ENCODE measurements at regions of chr22 and their contacts with region 1.

Region 1: DNA sequence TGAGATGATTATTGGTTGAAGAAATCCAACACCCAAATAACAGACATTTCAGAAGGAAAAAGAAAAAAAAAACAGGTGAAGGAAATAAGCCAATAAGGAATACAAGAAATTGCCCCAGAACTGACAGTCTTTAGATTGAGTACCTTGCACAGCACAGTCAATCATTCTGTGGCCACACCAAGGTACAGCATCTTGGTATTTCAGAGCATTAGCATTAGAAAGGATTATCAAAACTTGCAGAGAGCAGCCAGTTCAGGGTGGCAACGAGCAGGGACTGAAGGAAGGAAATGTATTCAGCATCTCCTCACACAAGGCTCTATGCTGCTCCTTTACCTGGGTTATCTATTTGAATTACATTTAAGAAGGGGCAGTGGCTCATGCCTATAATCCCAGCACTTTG is 2.1 kb downstream of the ADA2 start:
- DNase-seq: no peak
- ATAC-seq: peak; percentile 43
- H3K4me3 Mint-ChIP-seq: peak overlapping the region; percentile 85
- H3K27ac Mint-ChIP-seq: peak overlapping the region; percentile 88
- H3K4me1 Mint-ChIP-seq: peaks cover 60% of the 10 kb centered on the region
- H3K27me3 Mint-ChIP-seq: no peaks in the 10 kb centered on the region

Region 2: DNA sequence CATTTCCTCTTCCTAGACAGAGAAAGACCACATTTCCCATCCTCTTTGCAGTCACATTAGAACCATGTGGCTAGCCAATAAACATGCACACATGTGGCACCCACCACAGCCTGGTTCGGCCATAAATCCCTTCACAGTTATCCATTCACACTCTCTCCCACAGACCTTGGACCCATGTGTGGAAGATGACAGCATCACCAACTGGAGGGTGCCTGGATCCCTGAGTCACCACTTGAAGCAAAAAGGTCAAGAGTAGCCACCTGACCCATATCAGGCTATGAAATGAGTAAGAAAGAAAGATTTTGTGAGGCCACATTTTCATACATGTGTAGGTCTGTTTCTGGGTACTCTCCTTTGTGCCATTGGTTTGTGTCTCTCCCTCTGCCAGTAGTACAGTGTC is 87.0 kb before region 1 on chr22:
- POLR2A ChIA-PET with region 1: no interaction called
- DNase-seq: no peak
- ATAC-seq: no peak
- H3K4me3 Mint-ChIP-seq: no peak overlapping the region
- H3K27ac Mint-ChIP-seq: no peak overlapping the region
- H3K4me1 Mint-ChIP-seq: no peaks in the 10 kb centered on the region
- H3K27me3 Mint-ChIP-seq: peaks cover 4% of the 10 kb centered on the region

Region 3: GRCh38 chr22:17158568-17159503 is 58.3 kb before region 1 on chr22 and contains the start of gene HDHD5:
- POLR2A ChIA-PET with region 1: no interaction called
- DNase-seq: peak; percentile 89
- ATAC-seq: peak; percentile 85
- H3K4me3 Mint-ChIP-seq: peak within 1 kb of the TSS; percentile 84
- H3K27ac Mint-ChIP-seq: peak within 1 kb of the TSS; percentile 76
- H3K4me1 Mint-ChIP-seq: peaks cover 25% of the 10 kb centered on the region
- H3K27me3 Mint-ChIP-seq: no peaks in the 10 kb centered on the region
- total RNA-seq, gene HDHD5: 33.7 to 34.7 TPM

Region 4: GRCh38 chr22:17188237-17188636 is 28.9 kb before region 1 on chr22:
- POLR2A ChIA-PET with region 1: no interaction called
- DNase-seq: no peak
- ATAC-seq: no peak
- H3K4me3 Mint-ChIP-seq: no peak overlapping the region
- H3K27ac Mint-ChIP-seq: no peak overlapping the region
- H3K4me1 Mint-ChIP-seq: no peaks in the 10 kb centered on the region
- H3K27me3 Mint-ChIP-seq: no peaks in the 10 kb centered on the region

Region 5: GRCh38 chr22:17237038-17237668 is 20.0 kb after region 1 on chr22:
- POLR2A ChIA-PET with region 1: interaction called, 22 read pairs
- DNase-seq: peak; percentile 58
- ATAC-seq: peak; percentile 96
- H3K4me3 Mint-ChIP-seq: peak overlapping the region; percentile 83
- H3K27ac Mint-ChIP-seq: peak overlapping the region; percentile 93
- H3K4me1 Mint-ChIP-seq: peaks cover 14% of the 10 kb centered on the region
- H3K27me3 Mint-ChIP-seq: no peaks in the 10 kb centered on the region

Region 6: GRCh38 chr22:17258015-17258787 is 41.0 kb after region 1 on chr22:
- POLR2A ChIA-PET with region 1: interaction called, 20 read pairs
- DNase-seq: peak; percentile 61
- ATAC-seq: peak; percentile 91
- H3K4me3 Mint-ChIP-seq: peak overlapping the region; percentile 51
- H3K27ac Mint-ChIP-seq: peak overlapping the region; percentile 80
- H3K4me1 Mint-ChIP-seq: peaks cover 20% of the 10 kb centered on the region
- H3K27me3 Mint-ChIP-seq: peaks cover 3% of the 10 kb centered on the region

Region 7: GRCh38 chr22:17266251-17266971 is 49.2 kb after region 1 on chr22:
- POLR2A ChIA-PET with region 1: interaction called, 24 read pairs
- DNase-seq: peak; percentile 51
- ATAC-seq: peak; percentile 84
- H3K4me3 Mint-ChIP-seq: peak overlapping the region; percentile 57
- H3K27ac Mint-ChIP-seq: peak overlapping the region; percentile 81
- H3K4me1 Mint-ChIP-seq: peaks cover 24% of the 10 kb centered on the region
- H3K27me3 Mint-ChIP-seq: peaks cover 5% of the 10 kb centered on the region

Region 8: GRCh38 chr22:17339095-17339693 is 122.0 kb after region 1 on chr22:
- POLR2A ChIA-PET with region 1: no interaction called
- DNase-seq: no peak
- ATAC-seq: no peak
- H3K4me3 Mint-ChIP-seq: no peak overlapping the region
- H3K27ac Mint-ChIP-seq: no peak overlapping the region
- H3K4me1 Mint-ChIP-seq: no peaks in the 10 kb centered on the region
- H3K27me3 Mint-ChIP-seq: peaks cover 5% of the 10 kb centered on the region

Measured in activated naive CD8-positive, alpha-beta T cell treated with anti-CD3 and anti-CD28 coated beads, Interleukin-2, amount 10 ng/mL, durations not matched to agents 7 days and 5 days (primary cell).